ENCODE measurements at regions of chr7 and their contacts with region 1.

Region 1: DNA sequence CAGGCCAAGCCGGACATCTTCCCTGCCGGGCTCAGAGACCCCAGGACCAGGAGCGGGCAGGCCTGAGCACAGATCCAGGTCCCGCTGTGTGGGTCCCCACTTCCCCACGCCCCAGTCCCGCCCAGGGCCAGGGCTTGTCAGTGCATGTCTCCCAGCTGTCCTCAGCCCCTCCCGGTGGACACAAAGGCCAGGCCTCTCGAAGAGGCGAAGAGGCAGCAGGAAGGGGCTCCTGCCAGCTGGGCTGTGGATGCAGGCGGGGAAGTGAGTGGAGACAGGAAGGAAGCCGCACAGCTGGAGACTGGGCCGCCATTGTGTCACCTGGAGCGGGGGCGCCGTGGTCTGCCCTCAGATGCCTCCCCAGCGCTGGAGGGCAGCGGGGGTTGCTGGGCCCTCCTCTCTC is 4.8 kb downstream of the GRIFIN start:
- DNase-seq: no peak
- ATAC-seq: no peak
- H3K4me3 Mint-ChIP-seq: no peak overlapping the region
- H3K27ac Mint-ChIP-seq: no peak overlapping the region
- H3K4me1 Mint-ChIP-seq: peaks cover 4% of the 10 kb centered on the region
- H3K27me3 Mint-ChIP-seq: peaks cover 4% of the 10 kb centered on the region
- CTCF ChIP-seq: no peak

Region 2: GRCh38 chr7:2537981-2538851 is 66.8 kb after region 1 on chr7:
- CTCF ChIA-PET with region 1: no interaction called
- POLR2A ChIA-PET with region 1: no interaction called
- intact Hi-C with region 1: no loop called
- DNase-seq: no peak
- ATAC-seq: peak; percentile 46
- H3K4me3 Mint-ChIP-seq: no peak overlapping the region
- H3K27ac Mint-ChIP-seq: no peak overlapping the region
- H3K4me1 Mint-ChIP-seq: no peaks in the 10 kb centered on the region
- H3K27me3 Mint-ChIP-seq: no peaks in the 10 kb centered on the region
- CTCF ChIP-seq: no peak

Region 3: DNA sequence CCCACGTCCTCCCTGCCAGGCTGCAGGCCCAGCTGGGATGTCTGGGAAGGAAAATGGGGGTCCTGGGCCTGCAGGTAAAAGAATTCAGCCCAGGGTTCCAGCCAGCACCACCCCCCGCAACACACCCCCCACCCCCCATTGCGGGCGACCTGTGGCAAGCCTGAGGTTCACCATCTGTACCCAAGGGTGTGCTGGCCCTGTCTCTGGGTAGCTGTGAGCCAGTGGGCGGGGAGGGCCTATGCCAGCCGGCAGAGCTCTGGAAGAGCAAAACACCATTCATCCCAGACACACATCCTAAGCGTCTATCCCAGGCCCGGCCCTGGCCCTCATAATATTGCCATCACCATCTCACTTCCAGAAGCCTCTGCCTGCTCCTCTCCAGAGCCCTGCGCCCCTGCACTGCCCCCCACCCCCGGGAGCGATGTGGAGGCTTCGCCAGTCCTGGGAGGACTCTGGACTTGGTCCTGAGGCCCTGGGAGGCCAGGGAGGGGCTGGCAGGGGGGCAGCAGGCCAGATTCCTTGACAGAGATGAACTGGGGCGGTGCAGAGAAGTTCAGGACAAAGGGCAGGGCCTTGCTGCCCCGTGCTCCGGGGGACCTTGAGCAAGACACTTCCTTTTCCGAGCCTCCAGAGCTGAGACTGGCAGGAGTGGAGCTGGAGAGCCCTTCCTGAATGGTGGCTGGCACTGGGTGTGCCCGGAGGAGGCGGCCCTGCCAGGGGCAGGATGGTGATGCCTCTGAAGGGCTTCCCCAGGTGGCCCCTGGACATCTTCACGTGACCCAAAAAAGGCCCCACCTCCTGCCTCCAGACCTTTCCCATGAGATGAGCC is 151.7 kb after region 1 on chr7:
- CTCF ChIA-PET with region 1: no interaction called
- POLR2A ChIA-PET with region 1: interaction called, 10 read pairs
- intact Hi-C with region 1: no loop called
- DNase-seq: no peak
- ATAC-seq: no peak
- H3K4me3 Mint-ChIP-seq: no peak overlapping the region
- H3K27ac Mint-ChIP-seq: no peak overlapping the region
- H3K4me1 Mint-ChIP-seq: no peaks in the 10 kb centered on the region
- H3K27me3 Mint-ChIP-seq: peaks cover 7% of the 10 kb centered on the region
- CTCF ChIP-seq: no peak

Measured in activated B cell treated with CpG ODN at 0.5 μM for 24 hours (primary cell).